Heart left ventricle (tissue), 16 donors: ENCODE measurements at regions of chr2 and their contacts with region 1.

Region 1: GRCh38 chr2:95022309-95023221 is 2.9 kb upstream of the MAL start:
- DNase-seq: peak; percentile 32 to 75 (median 49)
- ATAC-seq: peak; percentile 42 to 77 (median 62)
- H3K4me3 ChIP-seq: no peak overlapping the region
- H3K27ac ChIP-seq: no peak overlapping the region
- H3K4me1 ChIP-seq: peaks cover 0 to 29% (median 5%) of the 10 kb centered on the region in 12 donors
- H3K27me3 ChIP-seq: peaks cover 0 to 61% (median 28%) of the 10 kb centered on the region in 9 donors
- CTCF ChIP-seq: peak; percentile 72 to 91 (median 85)
- POLR2A ChIP-seq: no peak

Region 2: GRCh38 chr2:95076784-95077529 is 54.4 kb after region 1 on chr2:
- intact Hi-C with region 1: loop called in 2 of 10 experiments (anchors 1 to 10 kb)
- DNase-seq: peak; percentile 46 to 85 (median 64)
- ATAC-seq: peak; percentile 64 to 87 (median 75)
- H3K4me3 ChIP-seq: peak overlapping the region in 11 of 12 donors; percentile 9 to 59 (median 46)
- H3K27ac ChIP-seq: no peak overlapping the region
- H3K4me1 ChIP-seq: peaks cover 0 to 11% (median 7%) of the 10 kb centered on the region in 12 donors
- H3K27me3 ChIP-seq: peaks cover 0 to 48% (median 21%) of the 10 kb centered on the region in 9 donors
- CTCF ChIP-seq: peak; percentile 64 to 85 (median 78)
- POLR2A ChIP-seq: no peak

Region 3: GRCh38 chr2:95110395-95110794 is 87.8 kb after region 1 on chr2:
- intact Hi-C with region 1: loop called in 8 of 10 experiments (anchors 1 to 10 kb)
- DNase-seq: no peak
- ATAC-seq: no peak
- H3K4me3 ChIP-seq: no peak overlapping the region
- H3K27ac ChIP-seq: no peak overlapping the region
- H3K4me1 ChIP-seq: peaks cover 0 to 15% (median 3%) of the 10 kb centered on the region in 12 donors
- H3K27me3 ChIP-seq: no peaks in the 10 kb centered on the region
- CTCF ChIP-seq: no peak
- POLR2A ChIP-seq: no peak